ENCODE measurements at regions of chr2 and their contacts with region 1.

Region 1: GRCh38 chr2:47767880-47768609 is 14.9 kb upstream of the MSH6 start:
- DNase-seq: peak; percentile 59
- H3K4me3 Mint-ChIP-seq: no peak overlapping the region
- H3K27ac Mint-ChIP-seq: no peak overlapping the region
- H3K4me1 Mint-ChIP-seq: peaks cover 11% of the 10 kb centered on the region
- H3K27me3 Mint-ChIP-seq: peaks cover 2% of the 10 kb centered on the region

Region 2: DNA sequence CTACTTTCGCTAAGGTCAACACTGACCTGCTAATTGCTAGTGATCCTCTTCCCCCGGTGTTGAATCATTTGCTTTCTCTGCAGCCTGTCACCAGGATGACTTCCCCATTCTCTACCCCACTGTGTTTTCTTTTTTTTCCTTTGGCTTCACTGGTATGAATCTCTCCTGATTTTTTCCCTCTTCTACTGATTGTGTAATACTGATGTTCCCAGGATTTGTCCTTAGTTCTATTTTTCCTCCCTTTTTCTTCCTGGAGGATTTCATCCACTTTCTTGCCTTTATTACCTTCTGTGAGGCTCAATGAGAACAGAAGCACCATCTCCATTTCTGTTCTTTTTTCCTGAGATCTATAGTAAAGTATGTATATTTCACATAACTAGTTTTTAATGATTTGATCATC is 379.2 kb before region 1 on chr2:
- intact Hi-C with region 1: loop called (anchors 1 kb)
- DNase-seq: no peak
- H3K4me3 Mint-ChIP-seq: no peak overlapping the region
- H3K27ac Mint-ChIP-seq: no peak overlapping the region
- H3K4me1 Mint-ChIP-seq: no peaks in the 10 kb centered on the region
- H3K27me3 Mint-ChIP-seq: peaks cover 20% of the 10 kb centered on the region

Region 3: GRCh38 chr2:47437287-47437686 is 330.8 kb before region 1 on chr2:
- intact Hi-C with region 1: loop called (anchors 5 kb)
- DNase-seq: no peak
- H3K4me3 Mint-ChIP-seq: no peak overlapping the region
- H3K27ac Mint-ChIP-seq: no peak overlapping the region
- H3K4me1 Mint-ChIP-seq: no peaks in the 10 kb centered on the region
- H3K27me3 Mint-ChIP-seq: no peaks in the 10 kb centered on the region

Region 4: DNA sequence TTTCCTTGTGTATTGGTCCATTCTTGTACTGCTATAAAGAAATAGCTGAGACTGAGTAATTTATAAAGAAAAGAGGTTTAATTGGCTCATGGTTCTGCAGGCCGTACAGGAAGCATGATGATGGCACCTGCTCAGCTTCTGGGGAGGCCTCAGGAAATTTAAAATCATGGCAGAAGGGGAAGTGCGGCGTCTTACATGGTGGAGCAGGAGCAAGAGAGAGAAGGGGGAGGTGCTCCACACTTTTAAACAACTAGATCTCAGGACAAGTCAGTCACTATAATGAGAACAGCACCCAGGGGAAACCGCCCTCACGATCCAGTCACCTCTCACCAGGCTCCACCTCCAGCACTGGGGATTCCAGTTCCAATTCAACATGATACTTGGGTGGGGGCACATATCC is 310.8 kb before region 1 on chr2:
- intact Hi-C with region 1: loop called (anchors 5 kb)
- DNase-seq: no peak
- H3K4me3 Mint-ChIP-seq: no peak overlapping the region
- H3K27ac Mint-ChIP-seq: no peak overlapping the region
- H3K4me1 Mint-ChIP-seq: peaks cover 19% of the 10 kb centered on the region
- H3K27me3 Mint-ChIP-seq: no peaks in the 10 kb centered on the region

Region 5: DNA sequence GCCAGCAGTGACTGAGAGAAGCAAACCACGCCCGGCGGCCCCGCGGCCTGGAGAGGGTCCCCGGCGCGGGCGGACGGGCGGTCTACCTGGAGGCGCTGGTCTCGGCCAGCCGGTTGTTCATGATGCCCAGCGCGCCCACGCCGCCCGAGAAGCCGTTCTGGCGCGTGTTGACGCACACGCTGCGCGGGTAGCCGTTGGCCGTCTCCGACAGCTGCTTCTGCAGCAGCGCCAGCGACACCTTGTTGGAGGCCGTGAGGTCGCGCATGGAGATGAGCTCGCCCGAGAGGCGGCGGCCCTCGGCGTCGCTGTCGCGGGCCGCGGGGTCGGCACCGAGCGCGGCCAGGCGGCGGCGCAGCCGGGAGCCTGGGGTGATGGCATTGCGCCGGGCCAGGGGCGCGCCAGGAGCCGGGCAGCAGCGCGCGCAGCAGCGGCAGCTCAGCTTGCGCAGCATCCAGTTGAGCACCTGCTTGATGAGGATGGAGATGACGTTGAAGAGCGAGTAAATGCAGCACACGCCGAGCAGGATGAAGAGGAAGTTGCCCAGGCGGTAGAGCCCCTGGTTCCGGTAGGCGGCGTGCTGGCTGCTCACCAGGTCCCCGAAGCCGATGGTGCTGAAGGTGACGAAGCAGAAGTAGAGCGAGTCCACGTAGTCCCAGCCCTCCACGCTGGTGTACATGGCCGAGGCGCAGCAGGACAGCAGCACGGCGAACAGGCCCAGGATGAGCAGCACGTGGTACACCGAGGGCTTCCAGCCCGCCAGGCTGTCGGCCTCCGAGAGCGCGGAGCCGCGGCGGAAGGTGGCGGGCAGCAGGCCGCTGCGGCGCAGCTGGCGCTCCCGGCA is 247.0 kb before region 1 on chr2:
- intact Hi-C with region 1: loop called (anchors 5 kb)
- DNase-seq: peak; percentile 70
- H3K4me3 Mint-ChIP-seq: peak overlapping the region; percentile 89
- H3K27ac Mint-ChIP-seq: peak overlapping the region; percentile 97
- H3K4me1 Mint-ChIP-seq: peaks cover 20% of the 10 kb centered on the region
- H3K27me3 Mint-ChIP-seq: no peaks in the 10 kb centered on the region

Region 6: DNA sequence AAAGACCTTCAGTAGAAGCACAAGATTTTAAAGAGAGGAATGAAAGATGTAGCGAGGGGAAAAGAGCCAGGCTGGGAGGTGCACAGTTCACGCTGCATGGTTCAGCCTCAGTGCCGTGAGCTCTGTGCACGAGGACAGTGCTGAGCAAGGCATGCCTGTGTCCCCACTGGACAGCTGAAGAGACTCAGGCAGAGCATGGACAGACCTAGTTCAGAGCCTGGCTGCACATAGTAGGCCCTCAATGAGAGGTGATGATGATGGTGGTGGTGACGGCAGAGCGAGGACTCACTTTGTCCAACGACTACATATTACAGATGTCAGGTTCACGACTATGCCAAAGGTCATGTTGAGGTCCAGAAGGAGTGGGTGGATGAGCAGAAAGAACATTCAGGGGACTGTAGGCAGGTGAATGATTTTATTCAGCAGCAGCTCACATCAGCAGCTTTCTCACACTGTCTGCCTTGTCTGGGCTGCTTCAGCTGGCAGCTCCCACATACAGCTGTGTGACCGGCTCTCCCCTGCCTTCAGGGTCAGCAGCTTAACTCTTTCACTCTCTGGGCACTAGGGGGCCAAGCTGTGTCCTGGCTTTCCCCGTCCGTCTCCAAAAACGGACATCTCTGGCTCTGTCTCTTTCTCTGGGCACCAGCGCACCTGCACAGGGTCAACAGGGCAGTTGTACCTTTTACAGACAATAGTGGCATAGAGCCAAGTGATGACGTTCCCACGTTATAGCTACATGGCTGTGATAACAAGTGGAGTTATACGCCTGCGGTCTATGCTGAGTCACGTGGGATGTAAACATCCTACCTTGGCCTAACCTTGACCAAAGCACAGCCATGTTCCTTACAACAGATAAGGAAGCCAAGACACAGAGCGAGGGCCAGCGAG is 113.9 kb before region 1 on chr2:
- intact Hi-C with region 1: loop called (anchors 10 kb)
- DNase-seq: no peak
- H3K4me3 Mint-ChIP-seq: no peak overlapping the region
- H3K27ac Mint-ChIP-seq: no peak overlapping the region
- H3K4me1 Mint-ChIP-seq: no peaks in the 10 kb centered on the region
- H3K27me3 Mint-ChIP-seq: no peaks in the 10 kb centered on the region

Region 7: GRCh38 chr2:47785986-47786385 is 17.9 kb after region 1 on chr2:
- intact Hi-C with region 1: no loop called
- DNase-seq: no peak
- H3K4me3 Mint-ChIP-seq: peak overlapping the region; percentile 91
- H3K27ac Mint-ChIP-seq: no peak overlapping the region
- H3K4me1 Mint-ChIP-seq: peaks cover 25% of the 10 kb centered on the region
- H3K27me3 Mint-ChIP-seq: no peaks in the 10 kb centered on the region